Naive thymus-derived CD8-positive, alpha-beta T cell (primary cell): ENCODE measurements at regions of chr4 and their contacts with region 1.

Region 1: DNA sequence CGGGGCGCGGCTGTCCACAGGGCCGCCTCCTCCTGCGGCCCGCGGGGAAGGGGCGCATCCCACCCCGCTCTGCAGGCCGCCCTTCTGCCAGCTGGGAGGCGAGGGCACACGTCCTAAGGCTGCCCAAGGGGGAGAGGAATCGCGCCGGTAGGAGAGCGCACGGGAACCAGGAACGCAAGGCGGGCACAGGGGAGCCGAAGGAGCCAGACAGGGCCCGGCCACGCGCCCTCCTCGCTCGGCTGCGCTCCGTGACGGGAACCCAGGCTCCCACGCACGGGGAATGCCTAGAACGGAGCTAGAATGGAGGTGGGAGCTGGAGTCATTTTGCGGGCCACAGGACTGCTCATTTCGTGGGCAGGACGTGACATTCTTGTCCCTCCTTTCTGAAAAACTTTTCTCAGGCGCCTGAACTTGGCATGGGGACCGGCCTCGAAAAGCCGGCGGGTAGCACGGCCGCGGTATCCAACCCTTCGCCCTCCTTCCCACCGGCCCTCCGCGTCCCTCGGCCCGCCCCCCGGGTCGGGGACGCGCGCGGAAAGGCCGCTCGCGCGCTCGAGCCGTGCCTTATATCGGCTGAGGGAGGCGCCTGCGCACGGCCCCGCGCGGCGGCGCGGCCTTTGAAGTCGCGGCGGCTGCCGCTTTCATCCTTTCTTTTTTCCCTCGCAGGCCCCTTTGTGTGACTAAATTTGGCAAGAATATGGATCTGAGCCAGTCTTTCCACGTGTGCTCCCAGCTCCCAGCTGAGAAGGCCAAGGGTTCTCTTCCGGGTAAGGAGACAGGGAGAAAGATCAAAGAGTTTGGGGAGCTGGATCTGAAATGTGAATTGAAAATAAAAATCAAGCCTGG is 4.2 kb upstream of the LEF1 start:
- DNase-seq: peak; percentile 69 to 85 (median 78)
- ATAC-seq: peak; percentile 35 to 39
- H3K4me3 Mint-ChIP-seq: peak overlapping the region; percentile 84 to 99 (median 94)
- H3K27ac Mint-ChIP-seq: peak overlapping the region; percentile 80 to 96 (median 92)
- H3K4me1 Mint-ChIP-seq: peaks cover 33 to 64% (median 53%) of the 10 kb centered on the region in 4 donors
- H3K27me3 Mint-ChIP-seq: peaks cover 0 to 24% (median 0%) of the 10 kb centered on the region in 5 donors

Region 2: DNA sequence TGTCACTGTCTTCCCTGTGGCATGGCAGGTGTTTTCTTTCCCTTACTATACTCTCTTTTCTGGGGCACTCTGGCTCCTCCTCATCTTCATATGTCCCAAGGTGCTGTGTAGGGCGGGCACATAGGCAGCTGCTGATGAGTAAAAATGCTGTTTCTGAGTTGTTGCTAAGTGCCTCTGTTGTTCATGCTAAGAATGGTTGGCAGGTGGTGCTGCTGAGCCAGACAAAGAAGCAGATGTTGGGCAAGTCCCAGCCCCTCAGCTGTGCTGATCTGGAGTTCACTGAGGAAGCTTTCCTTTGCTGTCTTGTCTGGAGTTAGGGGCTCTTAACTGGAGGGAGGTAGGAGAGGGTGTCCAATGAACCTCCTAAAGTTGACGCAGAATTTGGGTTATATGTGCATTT is 142.6 kb before region 1 on chr4:
- POLR2A ChIA-PET with region 1: interaction called, 30 read pairs
- DNase-seq: peak; percentile 48 to 89 (median 76)
- ATAC-seq: peak; percentile 79 to 89
- H3K4me3 Mint-ChIP-seq: peak overlapping the region; percentile 38 to 92 (median 80)
- H3K27ac Mint-ChIP-seq: peak overlapping the region; percentile 93 to 99 (median 96)
- H3K4me1 Mint-ChIP-seq: peaks cover 30 to 69% (median 61%) of the 10 kb centered on the region in 4 donors
- H3K27me3 Mint-ChIP-seq: no peaks in the 10 kb centered on the region

Region 3: GRCh38 chr4:108072300-108072699 is 100.7 kb before region 1 on chr4:
- POLR2A ChIA-PET with region 1: interaction called, 16 read pairs
- DNase-seq: peak; percentile 63 to 93 (median 86)
- ATAC-seq: peak; percentile 84 to 90
- H3K4me3 Mint-ChIP-seq: peak overlapping the region; percentile 51 to 83 (median 72)
- H3K27ac Mint-ChIP-seq: peak overlapping the region; percentile 87 to 99 (median 97)
- H3K4me1 Mint-ChIP-seq: peaks cover 37 to 86% (median 78%) of the 10 kb centered on the region in 4 donors
- H3K27me3 Mint-ChIP-seq: no peaks in the 10 kb centered on the region

Region 4: DNA sequence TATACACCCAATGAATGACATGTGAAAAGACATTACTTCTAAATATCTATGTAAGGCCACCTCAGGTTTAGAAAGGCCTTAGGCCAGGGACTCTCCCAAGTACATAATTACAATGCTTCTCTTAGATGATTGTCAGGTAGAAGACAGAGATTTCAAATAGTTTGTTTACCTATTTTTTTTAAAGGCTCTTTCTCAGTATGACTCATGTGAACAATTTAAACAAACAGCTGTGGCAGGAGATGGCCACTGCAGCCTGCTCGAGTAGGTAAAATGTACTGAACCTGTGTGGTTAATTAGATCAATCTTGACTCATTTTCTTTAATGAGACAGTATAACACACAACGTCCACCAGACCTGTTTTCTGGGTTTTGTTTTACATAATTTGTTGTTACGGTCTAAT is 54.5 kb before region 1 on chr4:
- POLR2A ChIA-PET with region 1: interaction called, 206 read pairs
- DNase-seq: peak in 2 of 10 donors; percentile 21 to 41
- ATAC-seq: peak; percentile 20 to 44
- H3K4me3 Mint-ChIP-seq: peak overlapping the region; percentile 32 to 82 (median 70)
- H3K27ac Mint-ChIP-seq: peak overlapping the region; percentile 68 to 98 (median 93)
- H3K4me1 Mint-ChIP-seq: peaks cover 45 to 91% (median 87%) of the 10 kb centered on the region in 4 donors
- H3K27me3 Mint-ChIP-seq: no peaks in the 10 kb centered on the region

Region 5: GRCh38 chr4:108155373-108155772 is 17.6 kb before region 1 on chr4:
- POLR2A ChIA-PET with region 1: interaction called, 180 read pairs
- DNase-seq: peak in 6 of 10 donors; percentile 33 to 69 (median 52)
- ATAC-seq: peak; percentile 55 to 69
- H3K4me3 Mint-ChIP-seq: peak overlapping the region; percentile 84 to 100 (median 92)
- H3K27ac Mint-ChIP-seq: peak overlapping the region; percentile 87 to 96 (median 92)
- H3K4me1 Mint-ChIP-seq: peaks cover 41 to 83% (median 72%) of the 10 kb centered on the region in 4 donors
- H3K27me3 Mint-ChIP-seq: no peaks in the 10 kb centered on the region

Region 6: GRCh38 chr4:108192018-108192417 is 19.0 kb after region 1 on chr4:
- POLR2A ChIA-PET with region 1: no interaction called
- DNase-seq: no peak
- ATAC-seq: no peak
- H3K4me3 Mint-ChIP-seq: no peak overlapping the region
- H3K27ac Mint-ChIP-seq: peak overlapping the region in 4 of 10 donors; percentile 47 to 71 (median 58)
- H3K4me1 Mint-ChIP-seq: peaks cover 15 to 36% (median 24%) of the 10 kb centered on the region in 4 donors
- H3K27me3 Mint-ChIP-seq: no peaks in the 10 kb centered on the region

Region 7: GRCh38 chr4:108466936-108467902 is 294.2 kb after region 1 on chr4:
- POLR2A ChIA-PET with region 1: interaction called, 16 read pairs
- DNase-seq: peak in 7 of 10 donors; percentile 13 to 70 (median 41)
- ATAC-seq: peak; percentile 85
- H3K4me3 Mint-ChIP-seq: peak overlapping the region; percentile 66 to 92 (median 79)
- H3K27ac Mint-ChIP-seq: peak overlapping the region; percentile 46 to 99 (median 95)
- H3K4me1 Mint-ChIP-seq: peaks cover 26 to 55% (median 40%) of the 10 kb centered on the region in 4 donors
- H3K27me3 Mint-ChIP-seq: no peaks in the 10 kb centered on the region